CD8-positive, alpha-beta memory T cell (primary cell): ENCODE measurements at regions of chr9 and their contacts with region 1.

Region 1: DNA sequence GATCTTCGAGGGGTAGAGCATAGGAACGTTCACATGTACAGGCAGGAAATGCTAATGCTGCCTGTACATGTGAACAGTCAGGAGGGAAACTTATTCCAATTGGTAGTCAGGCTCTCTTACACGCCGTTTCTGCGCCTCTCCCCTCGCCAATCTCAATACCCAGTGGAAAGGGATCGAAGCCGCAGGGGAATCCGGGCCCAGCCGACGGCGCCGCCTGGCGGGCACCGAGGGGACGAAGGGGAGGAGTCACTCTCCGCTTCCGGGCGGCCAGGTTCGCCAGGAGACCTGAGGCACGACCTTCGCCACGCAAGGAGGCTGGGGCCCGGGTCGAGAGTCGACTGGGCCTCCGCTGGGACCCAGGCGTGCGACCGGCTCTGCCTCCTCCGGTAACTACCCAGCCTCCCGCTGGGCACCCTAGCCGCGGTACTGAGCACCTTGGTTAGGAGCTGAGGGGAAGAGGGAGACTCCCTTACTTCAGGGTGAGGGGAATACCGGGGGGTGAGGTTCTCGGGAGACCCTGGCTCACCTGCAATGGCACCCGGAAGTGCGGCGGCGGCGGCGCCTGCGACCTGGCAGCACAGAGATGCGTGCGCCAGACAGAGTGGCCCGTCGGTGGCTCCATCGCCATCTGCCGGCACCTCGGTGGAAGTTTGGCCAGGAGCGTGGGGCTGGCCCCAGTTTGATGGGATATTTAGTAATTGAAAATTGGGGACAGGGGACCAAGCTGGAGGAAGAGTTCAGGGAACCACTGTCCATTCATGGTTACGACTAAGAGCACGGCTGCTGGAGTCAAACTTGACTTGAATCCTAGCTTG is at the start of gene PIGO:
- DNase-seq: peak; percentile 83 to 93 (median 87)
- H3K4me3 ChIP-seq: peak within 1 kb of the TSS; percentile 81
- H3K4me3 Mint-ChIP-seq: peak within 1 kb of the TSS; percentile 81 to 93 (median 86)
- H3K27ac ChIP-seq: peak within 1 kb of the TSS; percentile 93
- H3K27ac Mint-ChIP-seq: peak within 1 kb of the TSS; percentile 87 to 99 (median 95)
- H3K4me1 ChIP-seq: peaks cover 15% of the 10 kb centered on the region
- H3K4me1 Mint-ChIP-seq: peaks cover 35 to 43% (median 42%) of the 10 kb centered on the region in 3 donors
- H3K27me3 ChIP-seq: no peaks in the 10 kb centered on the region
- H3K27me3 Mint-ChIP-seq: no peaks in the 10 kb centered on the region
- total RNA-seq, gene PIGO: 31.7 to 32.1 TPM

Region 2: GRCh38 chr9:34899535-34900158 is 196.6 kb before region 1 on chr9:
- CTCF ChIA-PET with region 1: interaction called, 13 read pairs
- POLR2A ChIA-PET with region 1: no interaction called
- DNase-seq: peak; percentile 62 to 84 (median 64)
- H3K4me3 ChIP-seq: no peak overlapping the region
- H3K4me3 Mint-ChIP-seq: no peak overlapping the region
- H3K27ac ChIP-seq: no peak overlapping the region
- H3K27ac Mint-ChIP-seq: no peak overlapping the region
- H3K4me1 ChIP-seq: no peaks in the 10 kb centered on the region
- H3K4me1 Mint-ChIP-seq: no peaks in the 10 kb centered on the region
- H3K27me3 ChIP-seq: no peaks in the 10 kb centered on the region
- H3K27me3 Mint-ChIP-seq: peaks cover 13 to 44% of the 10 kb centered on the region in 2 donors

Region 3: DNA sequence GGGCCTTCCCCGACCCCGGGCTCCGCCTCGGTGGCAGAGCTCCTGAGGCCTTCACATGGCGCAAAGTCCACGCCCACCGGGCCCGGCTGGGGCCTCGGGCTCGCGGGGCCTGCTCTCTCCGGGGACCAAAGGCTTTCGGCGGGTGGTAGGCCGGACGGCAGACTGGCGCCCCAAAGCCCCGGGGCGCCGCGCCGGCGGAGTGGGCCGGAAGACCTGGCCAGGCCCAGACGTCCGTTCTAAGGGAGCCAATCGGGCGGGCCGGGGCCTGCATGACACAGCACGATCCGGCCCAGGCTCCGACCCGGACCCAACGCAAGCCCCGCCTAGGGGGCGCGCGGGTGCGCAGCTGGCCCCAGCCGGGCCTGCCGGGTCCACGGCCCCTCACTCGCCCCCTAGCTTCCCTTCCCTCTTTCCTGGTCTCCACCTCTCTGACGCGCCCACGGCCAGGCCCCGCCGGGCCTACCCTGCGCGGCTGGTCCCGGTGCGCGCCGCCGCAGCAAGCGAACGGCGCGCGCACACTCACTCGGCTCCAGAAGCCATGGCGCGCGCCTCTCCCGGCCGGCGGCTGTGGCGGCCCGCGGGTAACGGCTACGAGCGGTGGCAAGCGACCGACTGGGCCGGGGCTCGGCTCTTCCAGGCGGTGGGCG is 24.3 kb before region 1 on chr9:
- CTCF ChIA-PET with region 1: interaction called, 16 read pairs
- POLR2A ChIA-PET with region 1: interaction called, 11 read pairs
- DNase-seq: peak; percentile 67 to 82 (median 76)
- H3K4me3 ChIP-seq: peak overlapping the region; percentile 82
- H3K4me3 Mint-ChIP-seq: peak overlapping the region; percentile 85 to 95 (median 90)
- H3K27ac ChIP-seq: peak overlapping the region; percentile 93
- H3K27ac Mint-ChIP-seq: peak overlapping the region; percentile 85 to 99 (median 96)
- H3K4me1 ChIP-seq: peaks cover 39% of the 10 kb centered on the region
- H3K4me1 Mint-ChIP-seq: peaks cover 50 to 58% (median 57%) of the 10 kb centered on the region in 3 donors
- H3K27me3 ChIP-seq: no peaks in the 10 kb centered on the region
- H3K27me3 Mint-ChIP-seq: no peaks in the 10 kb centered on the region

Region 4: DNA sequence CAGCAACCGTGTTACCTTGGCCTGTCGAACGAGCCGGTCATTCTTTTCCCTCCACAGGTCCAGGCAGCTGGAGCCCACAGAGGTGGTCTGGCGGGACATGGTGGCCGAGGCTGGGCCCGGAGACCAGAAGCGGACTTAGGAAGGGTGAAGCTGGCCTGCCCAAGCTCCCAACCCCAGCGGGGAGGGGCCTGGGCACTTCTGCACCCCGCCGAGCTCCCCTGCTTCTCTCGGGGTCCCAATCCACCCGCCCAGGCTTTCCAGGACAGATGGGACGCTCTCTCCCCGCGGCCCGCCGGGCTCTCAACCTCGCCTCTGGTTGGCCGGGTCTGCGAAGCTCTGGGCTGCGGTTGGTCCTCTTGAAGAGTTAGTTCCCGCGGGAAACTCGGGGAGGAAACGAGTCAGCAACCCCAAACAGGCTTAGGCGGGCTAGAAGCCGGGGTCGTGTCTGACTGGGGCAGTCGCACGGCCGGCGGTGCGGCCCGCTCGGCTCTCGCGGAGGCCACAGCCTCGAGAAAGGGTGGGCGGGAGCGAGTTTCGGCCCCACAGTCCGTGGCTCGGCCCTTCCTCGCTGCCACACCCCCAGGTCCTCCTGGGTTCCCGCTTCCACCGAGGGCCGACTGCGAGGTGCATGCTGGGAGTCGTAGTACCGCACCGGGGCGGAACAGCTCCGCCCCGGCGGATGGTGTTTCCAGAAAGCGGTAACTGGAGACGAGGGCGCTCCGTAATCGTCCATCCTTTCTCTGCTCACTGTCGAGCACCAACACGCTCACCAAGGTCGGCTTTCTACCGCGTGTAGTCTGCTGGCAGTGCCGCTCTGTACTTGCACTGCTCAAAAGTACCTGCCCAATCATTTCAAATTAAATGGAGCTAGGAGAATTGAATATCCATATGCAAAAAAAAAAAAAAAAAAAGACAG is 16.6 kb before region 1 on chr9 and contains the start of gene FANCG:
- CTCF ChIA-PET with region 1: interaction called, 51 read pairs
- POLR2A ChIA-PET with region 1: interaction called, 8 read pairs
- DNase-seq: peak; percentile 67 to 84 (median 75)
- H3K4me3 ChIP-seq: peak within 1 kb of the TSS; percentile 83
- H3K4me3 Mint-ChIP-seq: peak within 1 kb of the TSS; percentile 91 to 96 (median 93)
- H3K27ac ChIP-seq: peak within 1 kb of the TSS; percentile 71
- H3K27ac Mint-ChIP-seq: peak within 1 kb of the TSS; percentile 57 to 95 (median 92)
- H3K4me1 ChIP-seq: peaks cover 10% of the 10 kb centered on the region
- H3K4me1 Mint-ChIP-seq: peaks cover 18 to 31% (median 22%) of the 10 kb centered on the region in 3 donors
- H3K27me3 ChIP-seq: no peaks in the 10 kb centered on the region
- H3K27me3 Mint-ChIP-seq: no peaks in the 10 kb centered on the region
- total RNA-seq, gene FANCG: 90.6 to 95.4 TPM

Region 5: DNA sequence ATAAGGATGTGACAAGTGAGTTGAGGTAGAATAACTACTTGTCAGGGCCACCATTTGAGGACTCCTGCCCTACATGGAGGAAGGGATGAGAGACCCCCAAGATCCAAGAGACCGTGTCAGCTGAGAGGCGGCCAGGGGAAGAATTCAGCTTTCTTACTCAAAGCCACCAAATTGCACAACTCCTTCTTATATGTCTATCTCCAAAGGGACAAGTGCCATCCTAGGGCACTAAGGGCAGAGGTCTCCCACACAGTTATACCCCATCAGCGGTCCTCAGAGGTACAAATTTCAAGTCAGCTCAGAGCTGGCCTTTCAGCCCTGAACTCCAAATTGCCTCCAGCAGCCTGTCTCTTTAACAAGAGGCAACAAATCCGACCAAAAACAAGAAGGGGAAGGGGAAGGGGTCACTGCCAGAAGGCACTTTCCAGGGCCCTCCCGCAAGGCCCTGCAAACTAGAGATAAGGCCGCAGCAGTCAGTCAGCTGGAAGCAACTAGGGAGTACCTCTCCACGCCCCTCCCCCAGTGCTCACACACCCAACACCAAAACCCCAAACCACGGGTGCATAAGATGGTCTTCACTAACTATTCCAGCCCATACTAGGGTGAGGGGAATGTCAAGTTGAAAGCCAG is 12.8 kb after region 1 on chr9:
- CTCF ChIA-PET with region 1: interaction called, 50 read pairs
- POLR2A ChIA-PET with region 1: interaction called, 4 read pairs
- DNase-seq: no peak
- H3K4me3 ChIP-seq: no peak overlapping the region
- H3K4me3 Mint-ChIP-seq: peak overlapping the region in 2 of 7 donors; percentile 1 to 65
- H3K27ac ChIP-seq: peak overlapping the region; percentile 64
- H3K27ac Mint-ChIP-seq: peak overlapping the region in 4 of 8 donors; percentile 60 to 87 (median 72)
- H3K4me1 ChIP-seq: peaks cover 36% of the 10 kb centered on the region
- H3K4me1 Mint-ChIP-seq: peaks cover 34 to 44% (median 41%) of the 10 kb centered on the region in 3 donors
- H3K27me3 ChIP-seq: no peaks in the 10 kb centered on the region
- H3K27me3 Mint-ChIP-seq: no peaks in the 10 kb centered on the region

Region 6: GRCh38 chr9:35116898-35117551 is 20.8 kb after region 1 on chr9:
- CTCF ChIA-PET with region 1: interaction called, 50 read pairs
- POLR2A ChIA-PET with region 1: no interaction called
- DNase-seq: peak; percentile 82 to 92 (median 83)
- H3K4me3 ChIP-seq: peak overlapping the region; percentile 61
- H3K4me3 Mint-ChIP-seq: peak overlapping the region; percentile 86 to 97 (median 89)
- H3K27ac ChIP-seq: peak overlapping the region; percentile 82
- H3K27ac Mint-ChIP-seq: peak overlapping the region; percentile 92 to 100 (median 96)
- H3K4me1 ChIP-seq: peaks cover 33% of the 10 kb centered on the region
- H3K4me1 Mint-ChIP-seq: peaks cover 38 to 45% (median 42%) of the 10 kb centered on the region in 3 donors
- H3K27me3 ChIP-seq: no peaks in the 10 kb centered on the region
- H3K27me3 Mint-ChIP-seq: peaks cover 0 to 1% of the 10 kb centered on the region in 2 donors